A673 (cell line): ENCODE measurements at regions of chr14 and their contacts with region 1.

Region 1: GRCh38 chr14:100828031-100828769 is 2.3 kb downstream of the MEG3 start:
- DNase-seq: no peak
- H3K4me3 ChIP-seq: peak overlapping the region; percentile 57
- H3K27ac ChIP-seq: no peak overlapping the region
- H3K4me1 ChIP-seq: peaks cover 12% of the 10 kb centered on the region
- H3K27me3 ChIP-seq: no peaks in the 10 kb centered on the region
- CTCF ChIP-seq: peak; percentile 25; the same call in 1 of the 2 replicates

Region 2: DNA sequence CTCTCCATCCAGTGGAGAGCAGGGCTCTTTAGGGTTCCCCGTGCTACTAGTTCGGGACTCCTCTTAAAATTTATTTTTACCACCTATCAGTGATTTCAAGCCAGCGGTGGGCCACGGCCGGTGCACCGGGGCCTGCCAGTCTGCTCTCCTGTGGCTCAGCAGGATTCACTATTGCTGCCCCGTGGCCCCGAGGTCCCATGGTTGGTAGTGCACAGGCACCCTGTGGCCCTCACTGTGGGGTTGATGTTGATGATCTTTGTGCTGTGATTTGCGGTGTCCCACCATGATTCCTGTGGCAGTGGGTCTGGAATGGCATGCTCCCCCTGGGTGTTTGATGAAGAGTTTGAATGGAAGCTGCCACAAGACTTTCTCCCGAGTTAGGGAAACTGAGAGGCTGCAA is 14.9 kb before region 1 on chr14:
- CTCF ChIA-PET with region 1: no interaction called
- POLR2A ChIA-PET with region 1: interaction called, 11 read pairs
- intact Hi-C with region 1: no loop called
- DNase-seq: no peak
- H3K4me3 ChIP-seq: no peak overlapping the region
- H3K27ac ChIP-seq: no peak overlapping the region
- H3K4me1 ChIP-seq: no peaks in the 10 kb centered on the region
- H3K27me3 ChIP-seq: no peaks in the 10 kb centered on the region
- CTCF ChIP-seq: no peak

Region 3: GRCh38 chr14:101328412-101329028 is 500.3 kb after region 1 on chr14:
- CTCF ChIA-PET with region 1: no interaction called
- POLR2A ChIA-PET with region 1: no interaction called
- intact Hi-C with region 1: no loop called
- DNase-seq: no peak
- H3K4me3 ChIP-seq: no peak overlapping the region
- H3K27ac ChIP-seq: no peak overlapping the region
- H3K4me1 ChIP-seq: no peaks in the 10 kb centered on the region
- H3K27me3 ChIP-seq: peaks cover 6% of the 10 kb centered on the region
- CTCF ChIP-seq: no peak